Heart right ventricle (tissue), 16 donors: ENCODE measurements at regions of chr9 and their contacts with region 1.

Region 1: GRCh38 chr9:122526600-122526999 is 493 bp downstream of the OR1N1 start:
- DNase-seq: no peak
- ATAC-seq: no peak
- H3K4me3 ChIP-seq: no peak overlapping the region
- H3K27ac ChIP-seq: no peak overlapping the region
- H3K4me1 ChIP-seq: no peaks in the 10 kb centered on the region
- H3K27me3 ChIP-seq: peaks cover 0 to 19% (median 9%) of the 10 kb centered on the region in 7 donors
- CTCF ChIP-seq: no peak

Region 2: GRCh38 chr9:122506964-122507363 is 19.6 kb before region 1 on chr9:
- intact Hi-C with region 1: loop called in 1 of 10 experiments (anchors 1 kb)
- DNase-seq: no peak
- ATAC-seq: no peak
- H3K4me3 ChIP-seq: no peak overlapping the region
- H3K27ac ChIP-seq: no peak overlapping the region
- H3K4me1 ChIP-seq: no peaks in the 10 kb centered on the region
- H3K27me3 ChIP-seq: peaks cover 0 to 9% (median 0%) of the 10 kb centered on the region in 7 donors
- CTCF ChIP-seq: no peak